Sigmoid colon (tissue), 7 donors: ENCODE measurements at regions of chr10 and their contacts with region 1.

Region 1: DNA sequence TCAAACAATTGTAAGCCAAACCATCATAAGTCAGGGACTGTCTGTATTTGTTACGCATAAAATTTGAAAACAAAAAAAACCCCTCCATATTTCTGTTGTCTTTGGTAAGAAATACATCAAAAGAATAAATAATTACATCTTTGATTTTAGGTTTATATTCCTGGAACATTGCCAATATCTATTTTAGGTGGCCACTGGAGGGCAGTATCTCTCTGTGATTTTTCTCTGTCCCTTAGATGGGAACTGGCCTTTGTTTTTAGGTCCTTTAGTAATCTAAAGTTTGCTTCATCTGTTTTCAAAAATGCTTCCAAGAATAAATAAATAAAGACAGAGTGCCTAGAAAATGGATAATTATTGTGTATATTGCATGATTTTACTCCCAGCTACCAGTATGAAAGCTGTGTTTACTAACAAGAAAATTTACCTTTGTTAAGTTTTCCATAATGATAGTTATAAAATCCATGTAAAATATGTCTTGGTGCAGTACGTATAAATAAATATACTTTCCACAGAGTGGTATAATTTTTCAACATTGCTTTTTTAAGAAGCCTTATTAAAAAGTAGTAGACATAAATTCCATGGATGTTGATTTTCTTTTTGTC is 64.2 kb downstream of the PHYHIPL start:
- DNase-seq: no peak
- H3K4me3 ChIP-seq: no peak overlapping the region
- H3K27ac ChIP-seq: no peak overlapping the region
- H3K4me1 ChIP-seq: peaks cover 0 to 9% (median 0%) of the 10 kb centered on the region in 4 donors
- H3K27me3 ChIP-seq: no peaks in the 10 kb centered on the region
- CTCF ChIP-seq: peak; percentile 61 to 72 (median 66)
- EP300 ChIP-seq: no peak
- POLR2A ChIP-seq: no peak

Region 2: DNA sequence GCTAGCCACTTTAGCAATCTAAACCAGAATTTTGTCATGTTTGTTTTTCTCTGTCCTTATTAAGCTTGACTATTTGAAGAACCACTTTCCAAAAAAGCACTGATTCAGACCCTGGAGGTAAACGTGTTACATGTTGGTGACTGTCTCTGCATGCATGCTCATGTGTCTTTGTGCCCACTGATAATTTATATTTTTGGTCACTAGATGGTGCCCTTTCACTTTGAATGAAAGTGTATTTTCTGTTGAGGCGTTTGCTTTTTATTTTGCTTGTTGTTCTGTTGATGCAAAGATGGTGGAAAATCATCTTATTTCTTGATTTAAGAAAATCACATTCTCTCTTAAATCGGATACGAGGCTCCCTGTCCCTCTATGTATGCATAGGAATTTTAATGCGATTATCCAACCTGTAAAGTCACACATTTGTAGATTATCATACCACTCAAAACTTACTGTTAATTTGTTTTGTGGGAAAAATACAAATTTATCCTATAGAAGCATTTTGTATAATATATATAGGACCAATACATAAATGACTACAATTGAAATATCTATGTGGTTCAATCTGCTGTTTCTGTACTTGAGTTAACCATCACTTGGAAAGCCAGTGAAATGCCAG is 458.7 kb before region 1 on chr10:
- intact Hi-C with region 1: loop called (anchors 5 kb)
- DNase-seq: no peak
- H3K4me3 ChIP-seq: no peak overlapping the region
- H3K27ac ChIP-seq: peak overlapping the region in 1 of 4 donors; percentile 39
- H3K4me1 ChIP-seq: peaks cover 0 to 16% (median 3%) of the 10 kb centered on the region in 4 donors
- H3K27me3 ChIP-seq: no peaks in the 10 kb centered on the region
- CTCF ChIP-seq: peak in 3 of 4 experiments; percentile 37 to 64 (median 48)
- EP300 ChIP-seq: no peak
- POLR2A ChIP-seq: no peak

Region 3: GRCh38 chr10:59362144-59362958 is 121.7 kb after region 1 on chr10 and contains the start of gene FAM13C:
- intact Hi-C with region 1: loop called (anchors 5 kb)
- DNase-seq: peak; percentile 86
- H3K4me3 ChIP-seq: peak within 1 kb of the TSS; percentile 58 to 70 (median 66)
- H3K27ac ChIP-seq: peak within 1 kb of the TSS; percentile 85 to 90 (median 87)
- H3K4me1 ChIP-seq: peaks cover 0 to 48% (median 31%) of the 10 kb centered on the region in 4 donors
- H3K27me3 ChIP-seq: no peaks in the 10 kb centered on the region
- CTCF ChIP-seq: peak in 1 of 4 experiments; percentile 16
- EP300 ChIP-seq: no peak
- POLR2A ChIP-seq: no peak
- total RNA-seq, gene FAM13C: 13.8 to 33.9 (median 22.7) TPM

Region 4: GRCh38 chr10:59434463-59435321 is 194.0 kb after region 1 on chr10:
- intact Hi-C with region 1: no loop called
- DNase-seq: no peak
- H3K4me3 ChIP-seq: no peak overlapping the region
- H3K27ac ChIP-seq: no peak overlapping the region
- H3K4me1 ChIP-seq: peaks cover 0 to 17% (median 0%) of the 10 kb centered on the region in 4 donors
- H3K27me3 ChIP-seq: no peaks in the 10 kb centered on the region
- CTCF ChIP-seq: no peak
- EP300 ChIP-seq: no peak
- POLR2A ChIP-seq: no peak

Region 5: GRCh38 chr10:59505926-59506325 is 265.2 kb after region 1 on chr10:
- intact Hi-C with region 1: no loop called
- DNase-seq: no peak
- H3K4me3 ChIP-seq: no peak overlapping the region
- H3K27ac ChIP-seq: no peak overlapping the region
- H3K4me1 ChIP-seq: no peaks in the 10 kb centered on the region
- H3K27me3 ChIP-seq: no peaks in the 10 kb centered on the region
- CTCF ChIP-seq: no peak
- EP300 ChIP-seq: no peak
- POLR2A ChIP-seq: no peak

Region 6: DNA sequence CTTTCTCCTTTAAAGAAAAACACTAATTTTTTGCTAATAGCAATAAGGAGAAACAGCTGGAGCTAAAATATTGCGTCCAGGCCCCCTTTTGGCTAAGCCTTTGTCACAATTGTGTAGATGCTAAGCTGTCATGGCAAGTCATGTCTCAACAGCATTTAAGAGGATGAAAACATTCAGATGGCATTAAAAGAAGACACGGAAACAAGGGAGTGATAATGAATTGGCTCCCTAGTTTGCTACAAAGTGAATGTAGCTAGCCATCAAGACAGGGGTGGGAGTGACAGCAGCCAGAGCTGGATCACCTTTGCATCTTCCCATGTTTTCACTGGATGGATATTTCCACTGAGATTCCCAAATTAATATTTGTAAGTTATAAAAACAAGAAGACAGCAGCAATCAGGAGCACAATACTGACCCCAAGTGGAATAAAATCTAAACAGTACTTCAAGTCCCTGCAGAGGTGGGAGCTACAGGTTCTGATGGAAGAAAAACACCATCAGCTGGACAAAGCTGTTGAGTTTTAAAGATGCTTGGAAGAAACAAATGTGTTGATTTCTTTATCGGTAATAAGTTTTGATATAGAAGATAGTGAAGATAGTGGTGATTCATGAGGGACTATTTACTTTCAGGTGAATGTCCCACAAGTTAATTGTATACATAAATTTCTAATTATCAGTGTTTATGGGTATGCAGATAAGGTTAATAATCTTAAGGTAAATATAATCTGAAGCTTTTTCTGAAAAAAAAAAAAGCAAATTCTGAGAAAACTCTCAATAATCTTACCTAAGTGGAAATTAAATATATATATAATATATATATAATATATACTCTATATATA is 339.6 kb after region 1 on chr10:
- intact Hi-C with region 1: loop called (anchors 2 kb)
- DNase-seq: no peak
- H3K4me3 ChIP-seq: no peak overlapping the region
- H3K27ac ChIP-seq: peak overlapping the region in 1 of 4 donors; percentile 16
- H3K4me1 ChIP-seq: peaks cover 0 to 67% (median 25%) of the 10 kb centered on the region in 4 donors
- H3K27me3 ChIP-seq: no peaks in the 10 kb centered on the region
- CTCF ChIP-seq: peak in 3 of 4 experiments; percentile 26 to 50 (median 42)
- EP300 ChIP-seq: no peak
- POLR2A ChIP-seq: no peak

Region 7: DNA sequence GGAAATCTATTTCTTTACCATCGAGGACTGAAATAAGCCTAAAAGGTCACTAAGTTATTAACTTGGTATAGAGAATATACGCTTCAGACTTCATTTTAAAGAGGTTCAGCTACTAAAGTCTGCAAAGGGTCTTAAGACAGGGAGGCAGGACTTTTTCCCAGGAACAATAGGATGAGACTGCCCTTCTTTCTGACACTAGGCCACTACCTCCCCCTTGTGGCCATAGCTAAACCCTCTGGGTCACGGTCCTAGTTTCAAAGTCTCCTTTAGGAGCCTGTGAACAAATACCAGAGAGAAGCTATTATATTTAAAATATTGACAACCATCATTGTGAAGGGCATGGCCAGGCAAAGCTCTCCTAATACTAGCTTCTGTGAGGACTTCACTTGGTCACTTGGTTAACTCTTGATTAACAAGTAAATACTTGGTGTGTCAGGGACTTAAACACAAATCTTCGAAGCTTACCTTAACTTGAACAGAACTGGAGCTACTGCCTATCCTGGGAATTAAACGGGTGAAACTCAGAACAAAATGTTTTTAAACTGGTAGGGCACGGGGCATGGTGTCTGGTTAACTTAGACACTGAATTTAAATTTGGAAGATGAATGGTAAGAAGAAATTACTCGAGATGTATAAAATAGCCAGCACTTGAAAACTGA is 590.0 kb after region 1 on chr10:
- intact Hi-C with region 1: loop called (anchors 10 kb)
- DNase-seq: no peak
- H3K4me3 ChIP-seq: no peak overlapping the region
- H3K27ac ChIP-seq: no peak overlapping the region
- H3K4me1 ChIP-seq: peaks cover 0 to 32% (median 30%) of the 10 kb centered on the region in 4 donors
- H3K27me3 ChIP-seq: no peaks in the 10 kb centered on the region
- CTCF ChIP-seq: peak; percentile 19 to 78 (median 56)
- EP300 ChIP-seq: no peak
- POLR2A ChIP-seq: no peak